Endothelial cell of umbilical vein (primary cell): ENCODE measurements at regions of chr3 and their contacts with region 1.

Region 1: DNA sequence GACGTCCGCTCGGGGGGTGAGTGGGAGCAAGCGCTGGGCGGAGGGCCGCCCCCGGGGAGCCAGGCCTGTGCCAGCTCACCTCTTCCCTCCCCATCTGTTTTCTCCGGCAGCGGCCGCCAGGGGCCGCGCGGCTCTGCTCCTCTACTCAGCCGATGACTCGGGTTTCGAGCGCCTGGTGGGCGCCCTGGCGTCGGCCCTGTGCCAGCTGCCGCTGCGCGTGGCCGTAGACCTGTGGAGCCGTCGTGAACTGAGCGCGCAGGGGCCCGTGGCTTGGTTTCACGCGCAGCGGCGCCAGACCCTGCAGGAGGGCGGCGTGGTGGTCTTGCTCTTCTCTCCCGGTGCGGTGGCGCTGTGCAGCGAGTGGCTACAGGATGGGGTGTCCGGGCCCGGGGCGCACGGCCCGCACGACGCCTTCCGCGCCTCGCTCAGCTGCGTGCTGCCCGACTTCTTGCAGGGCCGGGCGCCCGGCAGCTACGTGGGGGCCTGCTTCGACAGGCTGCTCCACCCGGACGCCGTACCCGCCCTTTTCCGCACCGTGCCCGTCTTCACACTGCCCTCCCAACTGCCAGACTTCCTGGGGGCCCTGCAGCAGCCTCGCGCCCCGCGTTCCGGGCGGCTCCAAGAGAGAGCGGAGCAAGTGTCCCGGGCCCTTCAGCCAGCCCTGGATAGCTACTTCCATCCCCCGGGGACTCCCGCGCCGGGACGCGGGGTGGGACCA is 632 bp upstream of the CRELD1 start:
- DNase-seq: peak; percentile 84
- H3K4me3 ChIP-seq: peak overlapping the region; percentile 19 to 76 (median 55)
- H3K27ac ChIP-seq: peak overlapping the region; percentile 85
- H3K4me1 ChIP-seq: peaks cover 16% of the 10 kb centered on the region
- H3K27me3 ChIP-seq: no peaks in the 10 kb centered on the region
- CTCF ChIP-seq: peak; percentile 75 to 91
- POLR2A ChIP-seq: no peak

Region 2: GRCh38 chr3:9582332-9582731 is 350.7 kb before region 1 on chr3:
- CTCF ChIA-PET with region 1: no interaction called
- POLR2A ChIA-PET with region 1: no interaction called
- dilution Hi-C with region 1: no loop called
- intact Hi-C with region 1: no loop called
- DNase-seq: no peak
- H3K4me3 ChIP-seq: no peak overlapping the region
- H3K27ac ChIP-seq: no peak overlapping the region
- H3K4me1 ChIP-seq: no peaks in the 10 kb centered on the region
- H3K27me3 ChIP-seq: no peaks in the 10 kb centered on the region
- CTCF ChIP-seq: no peak
- POLR2A ChIP-seq: no peak

Region 3: GRCh38 chr3:9715764-9716437 is 217.1 kb before region 1 on chr3:
- CTCF ChIA-PET with region 1: interaction called, 6 read pairs
- POLR2A ChIA-PET with region 1: no interaction called
- dilution Hi-C with region 1: no loop called
- intact Hi-C with region 1: loop called (anchors 5 kb)
- DNase-seq: peak; percentile 89
- H3K4me3 ChIP-seq: no peak overlapping the region
- H3K27ac ChIP-seq: no peak overlapping the region
- H3K4me1 ChIP-seq: no peaks in the 10 kb centered on the region
- H3K27me3 ChIP-seq: peaks cover 3 to 5% of the 10 kb centered on the region in 2 experiments
- CTCF ChIP-seq: peak; percentile 75 to 77
- POLR2A ChIP-seq: no peak

Region 4: DNA sequence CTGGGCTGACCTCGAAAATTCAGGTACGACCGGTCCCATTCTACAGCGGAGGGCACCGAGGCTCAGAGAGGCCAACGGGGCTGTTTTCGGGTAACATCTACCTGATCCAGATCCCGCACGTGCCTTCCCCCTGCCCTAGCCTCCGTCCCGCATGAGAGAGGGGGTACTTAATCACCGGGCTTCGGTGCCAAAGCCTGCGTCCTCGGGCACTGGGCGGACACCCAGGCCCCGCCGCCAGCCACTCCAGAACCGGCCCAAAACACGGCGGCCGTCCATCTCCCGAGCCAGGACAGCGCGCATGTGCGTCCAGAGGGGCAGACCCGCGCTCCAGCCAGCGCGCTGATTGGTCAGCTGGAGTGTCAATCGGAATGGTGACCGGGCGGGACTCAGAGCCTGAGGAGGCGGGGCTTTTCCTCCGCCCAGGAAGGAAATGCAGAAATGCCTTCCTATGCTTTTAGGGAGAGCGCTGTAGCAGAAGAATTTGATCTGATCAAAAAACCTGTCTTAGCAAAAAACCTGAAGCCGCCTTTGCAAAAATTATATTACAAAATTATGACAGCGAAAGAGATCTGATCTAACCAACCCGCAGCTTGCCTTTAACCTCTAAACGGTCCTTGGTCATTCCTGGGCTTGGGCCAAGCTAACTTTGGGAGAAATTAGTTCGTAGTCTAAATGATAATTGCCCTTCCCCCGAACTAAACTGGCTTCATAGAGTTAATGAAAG is 89.1 kb before region 1 on chr3 and contains the start of gene RPUSD3:
- CTCF ChIA-PET with region 1: interaction called, 8 read pairs
- POLR2A ChIA-PET with region 1: no interaction called
- dilution Hi-C with region 1: no loop called
- intact Hi-C with region 1: loop called (anchors 1 kb)
- DNase-seq: peak; percentile 96
- H3K4me3 ChIP-seq: peak within 1 kb of the TSS; percentile 64 to 80 (median 77)
- H3K27ac ChIP-seq: peak within 1 kb of the TSS; percentile 11
- H3K4me1 ChIP-seq: peaks cover 14% of the 10 kb centered on the region
- H3K27me3 ChIP-seq: no peaks in the 10 kb centered on the region
- CTCF ChIP-seq: no peak
- POLR2A ChIP-seq: peak; percentile 77
- total RNA-seq, gene RPUSD3: 34.8 and 38.9 TPM in 2 replicates

Region 5: GRCh38 chr3:9890249-9891071 is 42.5 kb before region 1 on chr3 and contains the start of gene JAGN1:
- CTCF ChIA-PET with region 1: interaction called, 11 read pairs
- POLR2A ChIA-PET with region 1: interaction called, 3 read pairs
- dilution Hi-C with region 1: no loop called
- intact Hi-C with region 1: loop called (anchors 5 kb)
- DNase-seq: peak; percentile 92
- H3K4me3 ChIP-seq: peak within 1 kb of the TSS; percentile 82 to 92 (median 89)
- H3K27ac ChIP-seq: peak within 1 kb of the TSS; percentile 76
- H3K4me1 ChIP-seq: peaks cover 25% of the 10 kb centered on the region
- H3K27me3 ChIP-seq: no peaks in the 10 kb centered on the region
- CTCF ChIP-seq: no peak
- POLR2A ChIP-seq: peak; percentile 95
- total RNA-seq, gene JAGN1: 29.6 and 31.4 TPM in 2 replicates

Region 6: GRCh38 chr3:10273702-10274305 is 340.8 kb after region 1 on chr3:
- CTCF ChIA-PET with region 1: no interaction called
- POLR2A ChIA-PET with region 1: no interaction called
- dilution Hi-C with region 1: no loop called
- intact Hi-C with region 1: loop called (anchors 1 kb)
- DNase-seq: no peak
- H3K4me3 ChIP-seq: no peak overlapping the region
- H3K27ac ChIP-seq: no peak overlapping the region
- H3K4me1 ChIP-seq: no peaks in the 10 kb centered on the region
- H3K27me3 ChIP-seq: no peaks in the 10 kb centered on the region
- CTCF ChIP-seq: no peak
- POLR2A ChIP-seq: no peak